OCI-LY7 (cell line): ENCODE measurements at regions of chr4 and their contacts with region 1.

Region 1: GRCh38 chr4:54064295-54065111 is at the start of gene CHIC2:
- DNase-seq: peak; percentile 96
- H3K4me3 ChIP-seq: peak within 1 kb of the TSS; percentile 98
- H3K27ac ChIP-seq: peak within 1 kb of the TSS; percentile 81
- H3K4me1 ChIP-seq: peaks cover 53% of the 10 kb centered on the region
- CTCF ChIP-seq: no peak
- total RNA-seq, gene CHIC2: 38.6 and 45.0 TPM in 2 replicates

Region 2: GRCh38 chr4:53365486-53366300 is 698.8 kb before region 1 on chr4 and contains the start of gene SCFD2:
- CTCF ChIA-PET with region 1: no interaction called
- POLR2A ChIA-PET with region 1: no interaction called
- intact Hi-C with region 1: loop called (anchors 5 kb)
- DNase-seq: peak; percentile 96
- H3K4me3 ChIP-seq: peak within 1 kb of the TSS; percentile 98
- H3K27ac ChIP-seq: peak within 1 kb of the TSS; percentile 50
- H3K4me1 ChIP-seq: peaks cover 60% of the 10 kb centered on the region
- CTCF ChIP-seq: no peak
- total RNA-seq, gene SCFD2: 52.0 and 52.9 TPM in 2 replicates

Region 3: GRCh38 chr4:53748328-53748772 is 316.2 kb before region 1 on chr4:
- CTCF ChIA-PET with region 1: no interaction called
- POLR2A ChIA-PET with region 1: no interaction called
- intact Hi-C with region 1: loop called (anchors 10 kb)
- DNase-seq: peak; percentile 99
- H3K4me3 ChIP-seq: peak overlapping the region; percentile 22
- H3K27ac ChIP-seq: peak overlapping the region; percentile 93
- H3K4me1 ChIP-seq: peaks cover 84% of the 10 kb centered on the region
- CTCF ChIP-seq: no peak

Region 4: GRCh38 chr4:53929955-53930798 is 134.3 kb before region 1 on chr4:
- CTCF ChIA-PET with region 1: no interaction called
- POLR2A ChIA-PET with region 1: no interaction called
- intact Hi-C with region 1: loop called (anchors 2 kb)
- DNase-seq: peak; percentile 82
- H3K4me3 ChIP-seq: no peak overlapping the region
- H3K27ac ChIP-seq: no peak overlapping the region
- H3K4me1 ChIP-seq: peaks cover 32% of the 10 kb centered on the region
- CTCF ChIP-seq: peak; percentile 95

Region 5: GRCh38 chr4:53962516-53963225 is 101.8 kb before region 1 on chr4:
- CTCF ChIA-PET with region 1: no interaction called
- POLR2A ChIA-PET with region 1: no interaction called
- intact Hi-C with region 1: loop called (anchors 5 kb)
- DNase-seq: no peak
- H3K4me3 ChIP-seq: no peak overlapping the region
- H3K27ac ChIP-seq: peak overlapping the region; percentile 46
- H3K4me1 ChIP-seq: peaks cover 44% of the 10 kb centered on the region
- CTCF ChIP-seq: no peak

Region 6: DNA sequence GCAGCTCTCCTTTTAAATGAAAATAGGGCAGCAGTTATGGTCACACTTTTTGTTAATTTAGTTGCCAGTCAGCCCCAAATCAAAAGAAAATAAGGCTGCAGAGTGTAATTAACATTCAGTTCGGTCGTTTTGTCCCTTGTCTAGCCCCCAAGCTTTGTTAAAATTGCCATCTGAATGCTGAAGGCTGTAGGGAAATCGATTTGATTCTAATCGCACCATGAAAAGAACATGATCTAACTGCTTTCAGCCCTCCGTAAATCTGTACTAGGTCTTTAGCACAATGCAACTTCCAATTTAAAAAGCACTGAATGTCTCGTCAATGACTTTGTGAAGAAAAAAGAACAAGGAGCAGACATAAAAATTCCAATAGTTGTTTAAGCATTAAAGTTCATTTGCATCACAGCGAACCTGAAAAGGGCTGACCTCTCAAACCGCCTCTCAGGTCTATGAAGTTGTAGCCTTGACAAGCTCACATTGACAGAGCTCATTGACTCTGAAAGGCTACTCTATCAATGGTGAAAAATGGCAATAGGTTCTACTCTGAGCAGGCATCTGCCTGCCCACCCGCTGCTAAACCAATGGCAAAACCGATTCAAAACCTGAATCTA is 49.0 kb before region 1 on chr4:
- CTCF ChIA-PET with region 1: no interaction called
- POLR2A ChIA-PET with region 1: interaction called, 63 read pairs
- intact Hi-C with region 1: loop called (anchors 2 kb)
- DNase-seq: peak; percentile 23
- H3K4me3 ChIP-seq: peak overlapping the region; percentile 17
- H3K27ac ChIP-seq: peak overlapping the region; percentile 87
- H3K4me1 ChIP-seq: peaks cover 79% of the 10 kb centered on the region
- CTCF ChIP-seq: no peak

Region 7: GRCh38 chr4:54217642-54218495 is 153.4 kb after region 1 on chr4:
- CTCF ChIA-PET with region 1: no interaction called
- POLR2A ChIA-PET with region 1: no interaction called
- intact Hi-C with region 1: loop called (anchors 5 kb)
- DNase-seq: peak; percentile 75
- H3K4me3 ChIP-seq: peak overlapping the region; percentile 41
- H3K27ac ChIP-seq: no peak overlapping the region
- H3K4me1 ChIP-seq: peaks cover 3% of the 10 kb centered on the region
- CTCF ChIP-seq: peak; percentile 97